CD4-positive, alpha-beta memory T cell (primary cell): ENCODE measurements at regions of chr15 and their contacts with region 1.

Region 1: DNA sequence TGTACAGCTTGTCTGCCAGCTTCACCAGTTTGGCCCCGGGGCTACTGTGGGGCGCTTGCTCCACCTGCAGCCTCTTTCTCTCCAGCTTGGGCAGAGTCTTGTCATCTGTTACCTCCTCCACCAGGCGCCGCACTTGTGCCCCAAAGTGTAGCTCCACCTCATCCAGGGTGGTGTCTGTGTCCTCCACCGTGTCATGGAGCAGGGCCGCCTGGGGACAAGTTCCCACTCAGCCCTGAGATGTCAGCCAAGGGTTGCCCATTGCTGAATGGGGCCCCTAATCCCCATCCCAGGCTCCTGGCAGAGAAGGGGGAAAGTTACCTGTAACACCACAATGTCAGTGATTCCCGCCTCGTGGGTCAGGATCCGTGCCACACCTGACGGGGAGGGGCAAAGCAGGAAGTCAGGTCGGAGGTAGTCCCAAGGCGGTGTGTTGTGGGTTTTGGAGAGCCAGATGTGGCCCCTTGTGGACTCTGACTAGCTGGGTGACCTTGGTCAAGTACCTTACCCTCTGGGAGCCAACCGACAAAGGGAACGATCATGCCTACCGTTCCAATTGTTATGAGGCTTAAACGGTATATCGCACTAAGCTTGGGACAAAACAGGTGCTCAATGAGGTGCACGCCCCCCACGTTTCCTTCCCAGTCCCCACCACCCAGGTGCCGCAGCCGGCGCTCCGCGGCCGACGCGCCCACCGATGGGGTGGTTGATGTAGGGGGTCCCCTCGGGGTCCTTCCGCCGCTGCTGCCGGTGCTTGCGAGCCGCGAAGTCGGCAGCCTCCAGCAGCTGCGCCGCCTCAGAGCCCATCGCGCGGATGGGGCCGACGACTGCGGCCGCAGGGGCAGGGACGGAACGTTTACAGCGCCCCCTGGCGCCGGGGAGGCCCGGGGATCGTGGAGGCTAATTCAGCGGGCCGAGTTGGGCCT is at the start of gene HDDC3:
- DNase-seq: peak; percentile 86 to 93 (median 88)
- H3K4me3 ChIP-seq: peak within 1 kb of the TSS; percentile 95 to 96
- H3K4me3 Mint-ChIP-seq: peak within 1 kb of the TSS; percentile 94 to 99 (median 98)
- H3K27ac ChIP-seq: peak within 1 kb of the TSS; percentile 82
- H3K27ac Mint-ChIP-seq: peak within 1 kb of the TSS; percentile 87 to 99 (median 99)
- H3K4me1 ChIP-seq: peaks cover 58% of the 10 kb centered on the region
- H3K4me1 Mint-ChIP-seq: peaks cover 35 to 77% (median 54%) of the 10 kb centered on the region in 4 donors
- H3K27me3 ChIP-seq: no peaks in the 10 kb centered on the region
- H3K27me3 Mint-ChIP-seq: no peaks in the 10 kb centered on the region
- total RNA-seq, gene HDDC3: 27.4 to 28.3 TPM

Region 2: DNA sequence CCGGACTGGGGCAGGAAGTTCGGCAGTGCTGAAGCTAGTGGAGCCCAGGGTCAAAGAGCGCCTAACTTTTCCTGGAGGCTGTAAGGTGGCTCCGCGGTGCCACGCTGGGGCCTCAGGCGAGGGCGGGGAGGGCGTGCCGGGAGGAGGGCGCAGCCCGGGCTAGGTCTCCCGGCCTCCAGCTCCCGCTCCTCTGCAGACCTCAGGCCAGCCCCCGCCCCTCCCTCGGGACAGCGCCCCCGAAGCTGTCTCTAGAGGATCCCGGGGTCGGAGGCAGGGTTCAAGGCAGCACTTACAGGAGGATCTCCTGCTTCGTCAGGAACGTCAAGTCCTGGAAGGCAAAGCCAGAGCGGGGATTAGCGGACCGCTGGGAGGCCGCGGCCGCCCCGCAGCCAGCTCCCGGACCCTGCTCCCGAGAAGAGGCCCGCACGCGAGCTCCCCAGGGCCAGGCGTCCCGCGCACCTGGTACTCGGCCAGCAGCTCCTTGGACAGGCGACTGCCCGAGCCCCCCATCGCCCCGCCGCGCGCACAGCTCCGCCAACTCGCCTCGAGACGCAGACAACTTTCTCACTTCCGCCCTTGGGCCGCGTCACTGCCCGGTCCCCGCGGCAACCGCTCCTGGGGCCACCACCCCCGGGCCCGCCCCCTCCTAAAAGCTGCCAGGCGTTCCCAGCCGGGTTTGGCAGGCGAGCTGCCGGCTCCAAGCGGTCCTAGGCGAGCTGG is 698.5 kb before region 1 on chr15 and contains the start of gene CIB1:
- CTCF ChIA-PET with region 1: interaction called, 5 read pairs
- POLR2A ChIA-PET with region 1: interaction called, 17 read pairs
- intact Hi-C with region 1: loop called (anchors 1 kb)
- DNase-seq: peak; percentile 96 to 98 (median 96)
- H3K4me3 ChIP-seq: peak within 1 kb of the TSS; percentile 81 to 100
- H3K4me3 Mint-ChIP-seq: peak within 1 kb of the TSS; percentile 89 to 96 (median 94)
- H3K27ac ChIP-seq: peak within 1 kb of the TSS; percentile 96
- H3K27ac Mint-ChIP-seq: peak within 1 kb of the TSS; percentile 95 to 100 (median 100)
- H3K4me1 ChIP-seq: peaks cover 53% of the 10 kb centered on the region
- H3K4me1 Mint-ChIP-seq: peaks cover 36 to 61% (median 48%) of the 10 kb centered on the region in 4 donors
- H3K27me3 ChIP-seq: no peaks in the 10 kb centered on the region
- H3K27me3 Mint-ChIP-seq: no peaks in the 10 kb centered on the region
- total RNA-seq, gene CIB1: 95.2 to 98.2 TPM

Region 3: DNA sequence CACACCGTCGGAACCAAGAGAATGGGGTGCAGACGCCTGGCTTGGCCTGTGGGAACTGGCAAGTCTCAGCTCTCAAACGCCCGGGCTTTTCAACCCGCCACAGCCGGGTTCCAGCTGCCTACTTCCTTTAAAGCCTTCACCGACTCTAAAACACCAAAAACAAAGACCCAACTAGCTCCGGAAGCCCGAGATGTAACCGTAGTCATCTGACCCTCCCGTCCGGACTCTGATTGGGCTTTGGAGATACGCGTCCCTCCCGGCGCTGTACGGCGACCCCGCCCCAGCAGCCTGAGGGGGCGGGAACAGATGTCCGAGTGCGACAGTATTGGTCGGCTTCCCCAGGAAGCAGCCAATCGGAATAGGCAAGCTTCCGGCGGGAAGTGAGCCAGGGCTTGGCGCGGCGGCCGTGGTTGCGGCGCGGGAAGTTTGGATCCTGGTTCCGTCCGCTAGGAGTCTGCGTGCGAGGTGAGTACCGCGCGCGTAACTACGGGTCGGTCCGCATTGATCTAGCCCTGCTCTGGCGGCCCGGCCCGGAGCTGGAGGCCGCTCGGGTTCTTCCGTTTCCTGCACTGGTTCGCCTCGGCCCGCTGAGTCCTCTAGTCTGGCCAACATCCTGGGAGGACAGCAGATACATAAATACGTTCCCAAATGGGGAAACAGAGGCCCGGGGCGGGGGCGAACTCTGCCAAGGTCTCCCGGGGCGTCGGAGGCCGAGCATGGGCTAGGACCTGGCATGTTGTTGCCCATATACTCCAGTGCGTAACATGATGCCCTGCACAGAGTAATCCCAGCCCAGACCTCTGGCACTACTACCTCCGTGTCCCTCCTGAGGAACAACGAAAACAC is 214.8 kb before region 1 on chr15 and contains the start of gene BLM:
- CTCF ChIA-PET with region 1: interaction called, 33 read pairs
- POLR2A ChIA-PET with region 1: interaction called, 15 read pairs
- intact Hi-C with region 1: loop called (anchors 2 kb)
- DNase-seq: peak; percentile 96 to 97 (median 97)
- H3K4me3 ChIP-seq: peak within 1 kb of the TSS; percentile 81 to 95
- H3K4me3 Mint-ChIP-seq: peak within 1 kb of the TSS; percentile 95 to 99 (median 98)
- H3K27ac ChIP-seq: peak within 1 kb of the TSS; percentile 82
- H3K27ac Mint-ChIP-seq: peak within 1 kb of the TSS; percentile 93 to 97 (median 95)
- H3K4me1 ChIP-seq: peaks cover 19% of the 10 kb centered on the region
- H3K4me1 Mint-ChIP-seq: peaks cover 16 to 31% (median 25%) of the 10 kb centered on the region in 4 donors
- H3K27me3 ChIP-seq: no peaks in the 10 kb centered on the region
- H3K27me3 Mint-ChIP-seq: no peaks in the 10 kb centered on the region
- total RNA-seq, gene BLM: 6.5 to 8.9 TPM

Region 4: GRCh38 chr15:90902040-90902839 is 29.8 kb before region 1 on chr15:
- CTCF ChIA-PET with region 1: interaction called, 344 read pairs
- POLR2A ChIA-PET with region 1: interaction called, 315 read pairs
- intact Hi-C with region 1: loop called (anchors 1 kb)
- DNase-seq: peak; percentile 73 to 79 (median 75)
- H3K4me3 ChIP-seq: peak overlapping the region; percentile 61 to 80
- H3K4me3 Mint-ChIP-seq: peak overlapping the region; percentile 76 to 95 (median 92)
- H3K27ac ChIP-seq: peak overlapping the region; percentile 68
- H3K27ac Mint-ChIP-seq: peak overlapping the region; percentile 85 to 96 (median 94)
- H3K4me1 ChIP-seq: peaks cover 16% of the 10 kb centered on the region
- H3K4me1 Mint-ChIP-seq: peaks cover 10 to 38% (median 26%) of the 10 kb centered on the region in 4 donors
- H3K27me3 ChIP-seq: no peaks in the 10 kb centered on the region
- H3K27me3 Mint-ChIP-seq: no peaks in the 10 kb centered on the region

Region 5: DNA sequence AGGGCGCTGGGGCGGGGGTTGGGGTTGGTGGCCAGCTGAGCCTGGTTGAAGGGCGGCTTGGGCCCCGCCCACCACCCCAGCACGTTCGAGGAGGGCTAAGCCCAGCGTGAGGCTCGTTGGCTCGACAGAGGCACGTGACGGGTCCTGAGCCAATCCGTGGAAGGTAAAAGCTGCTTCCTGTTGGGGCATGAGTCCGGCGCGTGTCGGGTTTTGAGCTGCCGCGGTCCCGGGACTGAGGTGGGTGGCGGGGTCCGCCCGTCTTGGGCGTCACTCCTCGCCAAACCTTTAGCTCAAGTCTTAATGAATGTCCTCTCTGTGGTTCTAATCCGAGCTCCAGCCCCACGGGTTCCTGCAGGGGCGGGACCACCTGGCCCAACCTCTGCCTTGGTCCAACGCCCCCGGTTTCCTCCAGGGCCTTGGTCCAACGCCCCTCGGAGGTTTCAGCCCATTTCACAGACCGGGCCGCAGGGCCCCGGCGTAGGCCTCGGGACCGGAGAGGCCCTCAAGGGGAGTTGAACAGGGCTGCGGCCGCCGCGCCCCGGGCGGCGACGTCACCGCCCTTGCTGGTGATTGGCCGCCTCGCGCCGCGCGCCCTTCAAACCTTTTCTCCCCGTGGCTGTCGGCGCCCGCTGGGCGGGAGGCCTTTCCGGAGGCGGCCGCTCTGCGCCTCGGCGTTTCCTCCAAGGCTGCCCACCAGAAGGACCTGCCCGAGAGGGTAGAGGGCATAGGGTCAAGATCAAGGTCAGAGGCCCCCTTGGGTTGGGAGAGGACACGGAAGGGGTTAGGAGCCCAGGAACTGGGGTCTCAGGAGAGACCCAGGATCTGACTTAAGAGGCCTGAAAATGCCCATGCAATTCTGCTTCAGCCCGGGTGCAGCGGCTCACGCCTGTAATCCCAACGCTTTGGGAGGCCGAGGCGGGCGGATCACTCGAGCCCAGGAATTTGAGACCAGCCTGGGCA is 23.0 kb after region 1 on chr15 and contains the start of gene RCCD1:
- CTCF ChIA-PET with region 1: interaction called, 155 read pairs
- POLR2A ChIA-PET with region 1: interaction called, 130 read pairs
- intact Hi-C with region 1: loop called (anchors 1 kb)
- DNase-seq: peak; percentile 84 to 91 (median 85)
- H3K4me3 ChIP-seq: peak within 1 kb of the TSS; percentile 90 to 98
- H3K4me3 Mint-ChIP-seq: peak within 1 kb of the TSS; percentile 85 to 92 (median 88)
- H3K27ac ChIP-seq: peak within 1 kb of the TSS; percentile 94
- H3K27ac Mint-ChIP-seq: peak within 1 kb of the TSS; percentile 82 to 98 (median 95)
- H3K4me1 ChIP-seq: peaks cover 15% of the 10 kb centered on the region
- H3K4me1 Mint-ChIP-seq: peaks cover 6 to 26% (median 18%) of the 10 kb centered on the region in 4 donors
- H3K27me3 ChIP-seq: no peaks in the 10 kb centered on the region
- H3K27me3 Mint-ChIP-seq: no peaks in the 10 kb centered on the region
- total RNA-seq, gene RCCD1: 14.0 to 15.6 TPM

Region 6: DNA sequence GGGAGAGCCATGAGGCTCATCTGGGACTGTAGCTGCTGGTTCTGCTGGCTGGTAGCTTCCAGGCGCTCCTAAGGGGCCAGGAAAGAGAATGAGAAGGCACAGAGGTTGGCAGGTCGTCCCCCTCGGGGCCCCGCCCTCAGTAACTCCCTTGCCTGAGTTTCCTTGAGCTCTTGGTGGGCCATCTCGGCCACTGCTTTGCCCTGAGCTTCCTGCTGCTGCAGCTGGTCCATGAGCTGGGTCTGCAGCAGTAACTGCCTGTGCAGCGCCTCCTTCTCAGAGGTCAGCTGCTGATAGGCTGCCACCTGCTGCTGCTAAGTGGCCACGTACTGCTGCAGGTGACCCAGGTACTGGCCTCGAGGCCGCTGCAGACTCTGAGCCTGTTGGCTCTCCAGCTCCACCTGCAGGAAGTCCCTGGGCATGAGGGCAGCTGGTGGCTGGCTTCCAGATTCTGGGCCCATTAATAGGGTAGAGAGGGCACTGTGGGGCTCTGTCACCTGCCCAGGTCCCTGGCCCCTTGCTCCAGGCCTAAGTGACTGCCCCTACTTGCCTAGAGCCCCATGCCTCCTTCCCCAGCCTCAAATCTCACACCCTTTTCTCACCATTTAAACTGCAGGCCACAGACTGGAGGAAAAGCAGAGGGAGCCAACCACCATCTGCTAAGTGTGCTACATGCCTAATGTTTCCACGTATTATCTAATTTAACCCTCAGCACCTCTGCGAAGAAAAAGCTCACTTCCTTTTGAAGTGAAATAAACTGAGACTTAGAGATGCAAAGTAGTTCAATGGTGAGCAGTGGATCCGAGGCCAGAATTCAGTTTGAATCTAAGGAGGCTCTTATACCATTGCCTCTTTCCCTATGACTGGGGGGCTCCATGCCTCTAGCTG is 101.2 kb after region 1 on chr15:
- CTCF ChIA-PET with region 1: interaction called, 17 read pairs
- POLR2A ChIA-PET with region 1: no interaction called
- intact Hi-C with region 1: no loop called
- DNase-seq: peak; percentile 40 to 54 (median 46)
- H3K4me3 ChIP-seq: no peak overlapping the region
- H3K4me3 Mint-ChIP-seq: no peak overlapping the region
- H3K27ac ChIP-seq: no peak overlapping the region
- H3K27ac Mint-ChIP-seq: peak overlapping the region in 3 of 7 donors; percentile 49 to 59 (median 50)
- H3K4me1 ChIP-seq: no peaks in the 10 kb centered on the region
- H3K4me1 Mint-ChIP-seq: peaks cover 1 to 13% (median 5%) of the 10 kb centered on the region in 4 donors
- H3K27me3 ChIP-seq: no peaks in the 10 kb centered on the region
- H3K27me3 Mint-ChIP-seq: no peaks in the 10 kb centered on the region

Region 7: DNA sequence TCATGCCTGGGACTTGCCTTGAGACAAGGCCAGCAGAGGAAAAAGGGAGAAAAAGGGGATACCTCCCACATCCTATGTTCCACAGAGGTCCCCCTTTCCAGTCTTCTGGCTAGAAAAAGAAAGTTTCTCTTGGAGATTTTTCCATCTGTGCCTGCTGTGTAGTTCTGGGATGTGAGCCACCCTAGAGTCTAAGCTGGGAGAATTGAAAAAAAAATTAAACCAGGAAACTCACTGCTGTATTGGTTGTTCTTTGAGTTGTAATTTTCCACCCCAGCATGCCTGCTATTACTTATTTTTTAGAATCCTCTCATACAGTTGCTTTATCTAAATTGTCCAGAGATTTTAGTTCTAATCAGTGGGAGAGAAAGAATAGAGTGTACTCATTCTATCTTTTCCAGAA is 236.5 kb after region 1 on chr15:
- CTCF ChIA-PET with region 1: no interaction called
- POLR2A ChIA-PET with region 1: no interaction called
- intact Hi-C with region 1: no loop called
- DNase-seq: no peak
- H3K4me3 ChIP-seq: no peak overlapping the region
- H3K4me3 Mint-ChIP-seq: no peak overlapping the region
- H3K27ac ChIP-seq: no peak overlapping the region
- H3K27ac Mint-ChIP-seq: no peak overlapping the region
- H3K4me1 ChIP-seq: no peaks in the 10 kb centered on the region
- H3K4me1 Mint-ChIP-seq: no peaks in the 10 kb centered on the region
- H3K27me3 ChIP-seq: no peaks in the 10 kb centered on the region
- H3K27me3 Mint-ChIP-seq: peaks cover 21% of the 10 kb centered on the region in 2 donors

Region 8: GRCh38 chr15:91852741-91853510 is 920.9 kb after region 1 on chr15:
- CTCF ChIA-PET with region 1: no interaction called
- POLR2A ChIA-PET with region 1: no interaction called
- intact Hi-C with region 1: loop called (anchors 5 kb)
- DNase-seq: peak; percentile 70 to 89 (median 81)
- H3K4me3 ChIP-seq: peak overlapping the region in 1 of 2 donors; percentile 48
- H3K4me3 Mint-ChIP-seq: peak overlapping the region; percentile 83 to 93 (median 87)
- H3K27ac ChIP-seq: peak overlapping the region; percentile 87
- H3K27ac Mint-ChIP-seq: peak overlapping the region; percentile 86 to 95 (median 94)
- H3K4me1 ChIP-seq: peaks cover 69% of the 10 kb centered on the region
- H3K4me1 Mint-ChIP-seq: peaks cover 50 to 79% (median 60%) of the 10 kb centered on the region in 4 donors
- H3K27me3 ChIP-seq: no peaks in the 10 kb centered on the region
- H3K27me3 Mint-ChIP-seq: no peaks in the 10 kb centered on the region